B cell (primary cell): ENCODE measurements at regions of chr17 and their contacts with region 1.

Region 1: DNA sequence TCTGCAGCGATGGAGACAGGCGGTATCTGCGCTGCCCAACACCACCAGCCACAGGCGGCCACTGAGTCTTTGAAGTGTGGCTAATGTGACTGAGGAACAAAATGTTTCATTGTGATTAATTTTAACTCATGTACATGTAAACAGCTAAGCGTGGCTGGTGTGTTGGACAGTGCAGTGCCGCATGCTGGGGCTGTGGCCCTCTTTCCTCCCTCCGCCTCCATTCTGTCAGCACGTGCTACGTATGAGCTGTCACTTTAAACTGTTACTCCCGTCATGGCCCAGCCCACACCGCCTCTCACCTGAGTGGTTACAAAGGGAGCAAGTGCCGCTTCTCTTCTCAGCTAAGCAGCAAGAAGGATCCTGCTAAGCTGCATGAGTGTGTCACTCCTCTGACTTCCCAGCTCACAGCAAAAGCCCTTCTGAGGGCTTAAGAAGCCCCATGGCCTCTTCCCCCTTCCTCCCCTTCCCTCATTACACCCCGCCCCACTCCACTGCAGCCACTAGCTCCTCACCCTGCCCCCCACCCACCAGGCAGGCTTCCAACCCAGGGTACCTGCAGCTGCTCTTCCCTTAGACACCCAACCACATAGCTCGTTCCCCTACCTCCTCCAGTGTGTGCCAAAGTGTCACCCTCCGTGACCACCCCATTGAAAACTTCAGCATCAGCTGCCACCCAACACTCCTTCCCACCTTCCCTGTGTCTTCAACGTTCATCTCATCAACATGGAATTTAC is 15.0 kb downstream of the HASPIN start:
- DNase-seq: peak; percentile 44
- ATAC-seq: peak; percentile 44
- H3K4me3 ChIP-seq: no peak overlapping the region
- H3K4me3 Mint-ChIP-seq: no peak overlapping the region
- H3K27ac ChIP-seq: no peak overlapping the region
- H3K27ac Mint-ChIP-seq: peak overlapping the region; percentile 43
- H3K4me1 ChIP-seq: peaks cover 7 to 32% of the 10 kb centered on the region in 2 donors
- H3K4me1 Mint-ChIP-seq: peaks cover 38% of the 10 kb centered on the region
- H3K27me3 ChIP-seq: no peaks in the 10 kb centered on the region
- H3K27me3 Mint-ChIP-seq: no peaks in the 10 kb centered on the region
- CTCF ChIP-seq: no peak

Region 2: DNA sequence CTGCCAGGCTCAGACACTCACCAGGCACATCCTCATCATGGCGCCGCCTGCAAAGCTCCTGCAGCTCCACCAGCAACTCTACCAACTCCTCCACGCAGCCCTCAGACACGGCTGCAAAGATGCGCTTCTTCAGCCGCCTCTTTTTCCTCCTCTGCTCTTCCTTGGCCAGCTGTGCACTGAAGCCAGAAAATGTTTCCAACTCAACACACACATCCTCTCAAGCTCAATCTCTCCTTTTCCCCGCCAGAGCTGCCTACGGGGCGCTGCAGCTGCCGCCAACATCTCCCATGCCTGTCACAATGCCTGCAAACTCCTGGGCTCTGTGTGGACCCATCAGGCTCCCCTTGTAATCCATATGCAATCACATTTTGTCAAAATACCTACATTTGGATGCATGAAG is 195.3 kb before region 1 on chr17:
- CTCF ChIA-PET with region 1: no interaction called
- POLR2A ChIA-PET with region 1: no interaction called
- intact Hi-C with region 1: no loop called
- DNase-seq: no peak
- ATAC-seq: no peak
- H3K4me3 ChIP-seq: no peak overlapping the region
- H3K4me3 Mint-ChIP-seq: no peak overlapping the region
- H3K27ac ChIP-seq: no peak overlapping the region
- H3K27ac Mint-ChIP-seq: no peak overlapping the region
- H3K4me1 ChIP-seq: no peaks in the 10 kb centered on the region
- H3K4me1 Mint-ChIP-seq: no peaks in the 10 kb centered on the region
- H3K27me3 ChIP-seq: no peaks in the 10 kb centered on the region
- H3K27me3 Mint-ChIP-seq: no peaks in the 10 kb centered on the region
- CTCF ChIP-seq: no peak

Region 3: DNA sequence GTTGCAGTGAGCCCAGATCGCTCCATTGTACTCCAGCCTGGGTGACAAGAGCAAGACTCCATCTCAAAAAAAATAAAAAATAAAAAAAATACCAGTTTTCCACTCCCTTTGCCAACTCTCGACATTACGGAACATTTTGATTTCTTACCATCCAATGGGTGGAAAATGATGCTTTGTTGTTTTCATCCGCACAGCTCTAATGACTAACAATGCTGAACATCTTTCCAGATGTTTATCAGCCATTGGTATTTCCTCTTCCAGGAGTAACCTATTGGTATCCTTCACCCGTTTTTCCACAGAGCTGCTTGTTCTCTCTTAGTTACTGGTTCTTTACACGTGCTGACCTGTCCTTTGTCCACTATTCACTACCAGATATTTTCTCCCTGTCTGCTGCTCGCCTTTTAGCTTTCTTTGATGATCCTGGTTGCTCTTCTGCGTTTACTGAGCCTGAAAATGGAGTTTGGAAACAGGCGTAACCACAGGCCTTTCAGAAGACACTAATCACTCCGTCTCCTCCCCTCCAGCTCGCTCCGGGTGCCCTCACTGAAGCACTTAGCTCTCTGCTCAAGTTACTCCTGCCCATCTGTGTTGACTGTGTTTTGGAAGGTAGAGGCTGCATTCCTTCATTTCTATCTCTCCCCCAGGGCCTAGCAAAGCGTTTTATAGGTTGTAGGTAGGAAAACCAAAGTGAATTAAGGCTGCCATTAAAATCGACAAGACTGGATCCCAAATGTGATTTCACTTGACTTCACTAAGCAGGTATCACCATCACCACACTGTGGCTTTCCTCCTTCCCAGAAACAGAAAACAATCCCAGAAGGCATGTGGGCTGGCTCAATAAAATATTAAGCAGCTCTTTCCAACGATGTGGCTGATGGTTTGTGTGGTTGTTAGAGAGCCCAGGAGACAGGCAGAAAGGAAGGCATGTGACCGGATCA is 111.6 kb before region 1 on chr17:
- CTCF ChIA-PET with region 1: no interaction called
- POLR2A ChIA-PET with region 1: no interaction called
- intact Hi-C with region 1: no loop called
- DNase-seq: no peak
- ATAC-seq: no peak
- H3K4me3 ChIP-seq: no peak overlapping the region
- H3K4me3 Mint-ChIP-seq: no peak overlapping the region
- H3K27ac ChIP-seq: no peak overlapping the region
- H3K27ac Mint-ChIP-seq: no peak overlapping the region
- H3K4me1 ChIP-seq: no peaks in the 10 kb centered on the region
- H3K4me1 Mint-ChIP-seq: no peaks in the 10 kb centered on the region
- H3K27me3 ChIP-seq: no peaks in the 10 kb centered on the region
- H3K27me3 Mint-ChIP-seq: no peaks in the 10 kb centered on the region
- CTCF ChIP-seq: no peak

Region 4: GRCh38 chr17:3683054-3683511 is 55.6 kb before region 1 on chr17:
- CTCF ChIA-PET with region 1: interaction called, 184 read pairs
- POLR2A ChIA-PET with region 1: interaction called, 4 read pairs
- intact Hi-C with region 1: loop called (anchors 2 kb)
- DNase-seq: peak; percentile 89
- ATAC-seq: peak; percentile 73
- H3K4me3 ChIP-seq: no peak overlapping the region
- H3K4me3 Mint-ChIP-seq: peak overlapping the region; percentile 24
- H3K27ac ChIP-seq: peak overlapping the region; percentile 36 to 56
- H3K27ac Mint-ChIP-seq: peak overlapping the region; percentile 89
- H3K4me1 ChIP-seq: peaks cover 19 to 50% of the 10 kb centered on the region in 2 donors
- H3K4me1 Mint-ChIP-seq: peaks cover 44% of the 10 kb centered on the region
- H3K27me3 ChIP-seq: no peaks in the 10 kb centered on the region
- H3K27me3 Mint-ChIP-seq: no peaks in the 10 kb centered on the region
- CTCF ChIP-seq: peak; percentile 98

Region 5: DNA sequence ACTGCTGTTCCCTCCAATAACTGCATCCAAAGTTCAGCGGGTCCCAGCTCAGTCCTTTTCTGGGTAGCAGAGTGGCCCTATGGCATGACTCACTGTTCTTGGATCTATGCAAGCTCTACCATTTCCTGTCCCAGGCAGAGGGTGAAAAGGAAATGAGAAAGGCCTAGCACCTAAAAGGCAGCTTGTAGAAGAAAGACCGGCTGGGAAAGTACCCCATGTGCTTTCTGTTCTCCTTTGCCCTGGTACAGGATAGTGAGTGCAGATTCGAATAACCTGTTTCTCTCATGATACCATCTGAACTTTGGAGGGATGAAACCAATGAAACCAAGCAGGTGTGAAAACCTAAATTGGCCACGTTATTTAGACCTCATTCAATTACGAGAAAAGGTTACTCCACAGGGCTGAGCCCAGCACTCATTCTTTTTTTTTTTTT is 27.8 kb before region 1 on chr17:
- CTCF ChIA-PET with region 1: interaction called, 20 read pairs
- POLR2A ChIA-PET with region 1: interaction called, 4 read pairs
- intact Hi-C with region 1: no loop called
- DNase-seq: peak; percentile 95
- ATAC-seq: peak; percentile 92
- H3K4me3 ChIP-seq: peak overlapping the region in 4 of 5 experiments; percentile 11 to 54 (median 35)
- H3K4me3 Mint-ChIP-seq: peak overlapping the region; percentile 85
- H3K27ac ChIP-seq: peak overlapping the region; percentile 60 to 82
- H3K27ac Mint-ChIP-seq: peak overlapping the region; percentile 96
- H3K4me1 ChIP-seq: peaks cover 38 to 54% of the 10 kb centered on the region in 2 donors
- H3K4me1 Mint-ChIP-seq: peaks cover 57% of the 10 kb centered on the region
- H3K27me3 ChIP-seq: no peaks in the 10 kb centered on the region
- H3K27me3 Mint-ChIP-seq: no peaks in the 10 kb centered on the region
- CTCF ChIP-seq: no peak

Region 6: DNA sequence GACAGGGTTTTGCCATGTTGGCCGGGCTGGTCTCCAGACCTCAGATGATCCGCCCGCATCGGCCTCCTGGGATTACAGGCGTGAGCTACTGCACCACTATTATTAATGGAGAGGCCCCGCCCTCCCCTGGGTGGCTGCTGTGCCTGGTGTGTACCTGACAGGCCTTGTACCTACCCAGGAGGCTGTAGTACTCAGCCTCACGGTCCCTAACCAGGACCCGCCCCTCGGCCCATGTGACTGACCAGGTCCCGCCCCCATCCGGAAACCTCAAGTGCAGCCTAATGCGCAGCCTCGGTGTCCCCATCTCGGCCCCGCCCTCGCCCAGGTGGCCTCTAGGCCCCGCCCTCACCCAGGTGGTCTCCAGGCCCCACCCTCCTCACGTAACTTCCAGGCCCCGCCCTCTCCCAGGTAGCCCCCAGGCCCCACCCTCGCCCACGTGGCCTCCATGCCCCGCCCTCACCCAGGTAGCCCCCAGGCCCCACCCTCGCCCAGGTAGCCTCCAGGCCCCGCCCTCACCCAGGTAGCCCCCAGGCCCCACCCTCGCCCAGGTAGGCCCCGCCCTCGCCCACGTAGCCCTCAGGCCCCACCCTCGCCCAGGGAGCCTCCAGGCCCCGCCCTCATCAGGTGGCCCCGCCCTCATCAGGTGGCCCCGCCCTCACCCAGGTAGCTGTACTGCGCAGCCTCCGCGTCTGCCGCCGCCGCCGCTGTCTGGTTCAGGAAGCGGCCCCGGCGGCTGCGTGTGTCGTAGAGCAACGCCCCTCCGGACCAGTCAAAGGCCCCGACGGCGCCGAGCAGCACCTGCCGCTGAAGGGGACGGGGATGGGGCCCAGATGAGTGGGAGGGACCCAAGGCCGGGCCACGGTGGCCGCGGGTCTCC is 16.0 kb after region 1 on chr17:
- CTCF ChIA-PET with region 1: interaction called, 176 read pairs
- POLR2A ChIA-PET with region 1: interaction called, 9 read pairs
- intact Hi-C with region 1: no loop called
- DNase-seq: peak; percentile 89
- ATAC-seq: peak; percentile 93
- H3K4me3 ChIP-seq: peak overlapping the region in 4 of 5 experiments; percentile 28 to 57 (median 44)
- H3K4me3 Mint-ChIP-seq: peak overlapping the region; percentile 56
- H3K27ac ChIP-seq: peak overlapping the region in 1 of 2 donors; percentile 46
- H3K27ac Mint-ChIP-seq: peak overlapping the region; percentile 59
- H3K4me1 ChIP-seq: peaks cover 3 to 32% of the 10 kb centered on the region in 2 donors
- H3K4me1 Mint-ChIP-seq: peaks cover 22% of the 10 kb centered on the region
- H3K27me3 ChIP-seq: no peaks in the 10 kb centered on the region
- H3K27me3 Mint-ChIP-seq: no peaks in the 10 kb centered on the region
- CTCF ChIP-seq: no peak

Region 7: GRCh38 chr17:3788200-3788599 is 49.5 kb after region 1 on chr17:
- CTCF ChIA-PET with region 1: interaction called, 11 read pairs
- POLR2A ChIA-PET with region 1: no interaction called
- intact Hi-C with region 1: no loop called
- DNase-seq: no peak
- ATAC-seq: no peak
- H3K4me3 ChIP-seq: no peak overlapping the region
- H3K4me3 Mint-ChIP-seq: no peak overlapping the region
- H3K27ac ChIP-seq: no peak overlapping the region
- H3K27ac Mint-ChIP-seq: no peak overlapping the region
- H3K4me1 ChIP-seq: peaks cover 3 to 4% of the 10 kb centered on the region in 2 donors
- H3K4me1 Mint-ChIP-seq: peaks cover 4% of the 10 kb centered on the region
- H3K27me3 ChIP-seq: no peaks in the 10 kb centered on the region
- H3K27me3 Mint-ChIP-seq: no peaks in the 10 kb centered on the region
- CTCF ChIP-seq: no peak

Region 8: DNA sequence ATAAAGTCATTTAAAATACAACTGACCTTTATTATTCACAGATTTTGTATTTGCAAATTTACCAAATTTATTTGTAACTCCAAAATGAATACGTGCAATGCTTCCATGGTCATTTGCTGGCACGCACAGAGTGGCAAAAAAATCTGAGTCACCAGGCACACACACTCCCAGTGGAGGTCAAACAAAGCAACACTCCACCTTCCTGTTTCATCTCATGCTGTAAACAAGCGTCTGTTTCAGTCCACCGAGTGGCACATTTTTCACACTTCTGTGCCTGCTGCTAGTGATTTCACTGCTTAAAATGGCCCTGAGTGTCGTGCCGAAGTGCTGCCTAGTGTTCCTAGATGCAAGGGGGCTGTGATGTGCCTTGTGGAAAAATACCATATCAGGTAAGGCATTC is 80.1 kb after region 1 on chr17:
- CTCF ChIA-PET with region 1: interaction called, 482 read pairs
- POLR2A ChIA-PET with region 1: interaction called, 3 read pairs
- intact Hi-C with region 1: no loop called
- DNase-seq: no peak
- ATAC-seq: peak; percentile 71
- H3K4me3 ChIP-seq: no peak overlapping the region
- H3K4me3 Mint-ChIP-seq: peak overlapping the region; percentile 53
- H3K27ac ChIP-seq: no peak overlapping the region
- H3K27ac Mint-ChIP-seq: peak overlapping the region; percentile 88
- H3K4me1 ChIP-seq: peaks cover 5 to 30% of the 10 kb centered on the region in 2 donors
- H3K4me1 Mint-ChIP-seq: peaks cover 26% of the 10 kb centered on the region
- H3K27me3 ChIP-seq: no peaks in the 10 kb centered on the region
- H3K27me3 Mint-ChIP-seq: no peaks in the 10 kb centered on the region
- CTCF ChIP-seq: no peak

Region 9: GRCh38 chr17:4074831-4075495 is 336.2 kb after region 1 on chr17:
- CTCF ChIA-PET with region 1: interaction called, 7 read pairs
- POLR2A ChIA-PET with region 1: interaction called, 4 read pairs
- intact Hi-C with region 1: loop called (anchors 10 kb)
- DNase-seq: peak; percentile 75
- ATAC-seq: peak; percentile 53
- H3K4me3 ChIP-seq: no peak overlapping the region
- H3K4me3 Mint-ChIP-seq: peak overlapping the region; percentile 75
- H3K27ac ChIP-seq: peak overlapping the region; percentile 20 to 54
- H3K27ac Mint-ChIP-seq: peak overlapping the region; percentile 76
- H3K4me1 ChIP-seq: peaks cover 13 to 17% of the 10 kb centered on the region in 2 donors
- H3K4me1 Mint-ChIP-seq: peaks cover 18% of the 10 kb centered on the region
- H3K27me3 ChIP-seq: no peaks in the 10 kb centered on the region
- H3K27me3 Mint-ChIP-seq: no peaks in the 10 kb centered on the region
- CTCF ChIP-seq: peak; percentile 78